ENCODE measurements at regions of chr9 and their contacts with region 1.

Region 1: DNA sequence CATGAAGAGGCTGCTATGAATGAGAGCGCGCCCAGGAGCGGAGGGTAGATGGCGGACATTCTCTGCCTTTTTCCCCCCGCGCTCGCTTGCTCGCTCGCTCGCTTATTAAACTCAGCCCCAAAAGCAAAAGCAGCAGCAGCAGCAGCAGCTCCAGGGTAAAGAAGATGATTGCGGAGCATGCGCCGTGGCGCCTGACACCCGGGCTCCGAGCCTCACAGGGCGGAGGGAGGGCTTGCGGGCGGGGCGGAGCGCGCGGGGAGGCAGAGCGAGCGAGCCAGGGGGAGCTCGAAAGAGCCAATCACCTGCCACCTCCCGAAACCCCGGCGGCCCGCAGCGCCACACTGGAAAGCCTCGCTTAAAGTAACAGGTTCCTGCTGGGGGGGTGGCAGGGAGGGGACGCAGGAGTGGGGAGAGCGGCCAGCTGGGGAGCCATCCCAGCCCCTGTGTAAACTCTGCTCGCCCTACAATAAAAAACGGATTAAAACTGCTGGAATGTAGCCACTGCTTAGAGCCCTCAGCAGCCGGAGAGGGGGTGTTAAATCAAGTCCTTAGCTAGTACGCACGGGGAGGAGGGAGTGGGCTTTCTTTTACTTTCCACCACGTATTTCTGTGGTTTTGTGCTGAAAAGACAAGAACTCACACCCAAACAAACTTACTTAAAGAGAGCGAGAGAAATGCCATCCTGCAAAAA is at the start of gene MLLT3:
- DNase-seq: peak; percentile 91 to 98 (median 98)
- ATAC-seq: peak; percentile 88
- H3K4me3 ChIP-seq: peak within 1 kb of the TSS; percentile 84
- H3K4me3 Mint-ChIP-seq: peak within 1 kb of the TSS; percentile 92 to 100 (median 98)
- H3K27ac ChIP-seq: peak within 1 kb of the TSS; percentile 89
- H3K27ac Mint-ChIP-seq: peak within 1 kb of the TSS; percentile 89 to 100 (median 99)
- H3K4me1 ChIP-seq: peaks cover 21 to 40% of the 10 kb centered on the region in 2 donors
- H3K4me1 Mint-ChIP-seq: peaks cover 30 to 48% (median 45%) of the 10 kb centered on the region in 7 donors
- H3K27me3 ChIP-seq: no peaks in the 10 kb centered on the region
- H3K27me3 Mint-ChIP-seq: no peaks in the 10 kb centered on the region
- total RNA-seq, gene MLLT3: 40.9 to 85.3 (median 71.3) TPM

Region 2: GRCh38 chr9:19048966-19049916 is 1573.2 kb before region 1 on chr9 and contains the start of gene RRAGA:
- CTCF ChIA-PET with region 1: no interaction called
- POLR2A ChIA-PET with region 1: no interaction called
- intact Hi-C with region 1: loop called (anchors 1 to 5 kb)
- DNase-seq: peak; percentile 90 to 96 (median 95)
- ATAC-seq: peak; percentile 95
- H3K4me3 ChIP-seq: peak within 1 kb of the TSS; percentile 88
- H3K4me3 Mint-ChIP-seq: peak within 1 kb of the TSS; percentile 92 to 99 (median 95)
- H3K27ac ChIP-seq: peak within 1 kb of the TSS; percentile 85
- H3K27ac Mint-ChIP-seq: peak within 1 kb of the TSS; percentile 97 to 100 (median 98)
- H3K4me1 ChIP-seq: peaks cover 20% of the 10 kb centered on the region in 2 donors
- H3K4me1 Mint-ChIP-seq: peaks cover 6 to 50% (median 42%) of the 10 kb centered on the region in 7 donors
- H3K27me3 ChIP-seq: no peaks in the 10 kb centered on the region
- H3K27me3 Mint-ChIP-seq: peaks cover 0 to 2% (median 0%) of the 10 kb centered on the region in 5 donors
- total RNA-seq, gene RRAGA: 25.9 to 53.6 (median 51.9) TPM

Region 3: GRCh38 chr9:19976226-19976625 is 646.2 kb before region 1 on chr9:
- CTCF ChIA-PET with region 1: no interaction called
- POLR2A ChIA-PET with region 1: no interaction called
- intact Hi-C with region 1: loop called in 1 of 2 experiments (anchors 1 kb)
- DNase-seq: peak in 8 of 9 donors; percentile 20 to 58 (median 39)
- ATAC-seq: peak; percentile 63
- H3K4me3 ChIP-seq: no peak overlapping the region
- H3K4me3 Mint-ChIP-seq: peak overlapping the region in 7 of 10 donors; percentile 1 to 69 (median 42)
- H3K27ac ChIP-seq: no peak overlapping the region
- H3K27ac Mint-ChIP-seq: peak overlapping the region; percentile 5 to 89 (median 79)
- H3K4me1 ChIP-seq: peaks cover 0 to 14% of the 10 kb centered on the region in 2 donors
- H3K4me1 Mint-ChIP-seq: peaks cover 7 to 30% (median 29%) of the 10 kb centered on the region in 7 donors
- H3K27me3 ChIP-seq: no peaks in the 10 kb centered on the region
- H3K27me3 Mint-ChIP-seq: no peaks in the 10 kb centered on the region

Region 4: DNA sequence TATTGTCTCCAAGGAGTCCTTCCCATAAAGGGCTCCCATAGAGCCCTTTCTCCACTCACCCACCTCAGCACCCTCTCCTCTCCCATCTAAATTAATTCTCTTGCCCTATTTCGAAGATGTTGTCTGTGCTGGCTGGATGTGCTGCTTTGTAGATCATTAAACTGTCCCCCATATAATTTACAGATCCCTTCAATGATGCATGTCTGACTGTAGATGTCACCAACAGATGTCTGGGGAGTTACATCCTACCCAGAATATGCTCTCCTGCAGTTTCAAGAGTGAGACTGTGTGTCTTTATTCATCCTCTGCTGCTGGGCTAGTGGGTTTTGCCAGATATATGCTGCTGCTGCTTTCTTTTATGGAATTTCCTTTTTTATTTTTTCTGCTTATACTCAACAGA is 351.4 kb before region 1 on chr9:
- CTCF ChIA-PET with region 1: no interaction called
- POLR2A ChIA-PET with region 1: interaction called, 4 read pairs
- intact Hi-C with region 1: loop called in 1 of 2 experiments (anchors 1 kb)
- DNase-seq: peak in 5 of 9 donors; percentile 9 to 34 (median 25)
- ATAC-seq: no peak
- H3K4me3 ChIP-seq: no peak overlapping the region
- H3K4me3 Mint-ChIP-seq: no peak overlapping the region
- H3K27ac ChIP-seq: no peak overlapping the region
- H3K27ac Mint-ChIP-seq: peak overlapping the region in 5 of 9 donors; percentile 0 to 42 (median 12)
- H3K4me1 ChIP-seq: no peaks in the 10 kb centered on the region
- H3K4me1 Mint-ChIP-seq: peaks cover 7 to 35% (median 12%) of the 10 kb centered on the region in 7 donors
- H3K27me3 ChIP-seq: no peaks in the 10 kb centered on the region
- H3K27me3 Mint-ChIP-seq: no peaks in the 10 kb centered on the region

Region 5: DNA sequence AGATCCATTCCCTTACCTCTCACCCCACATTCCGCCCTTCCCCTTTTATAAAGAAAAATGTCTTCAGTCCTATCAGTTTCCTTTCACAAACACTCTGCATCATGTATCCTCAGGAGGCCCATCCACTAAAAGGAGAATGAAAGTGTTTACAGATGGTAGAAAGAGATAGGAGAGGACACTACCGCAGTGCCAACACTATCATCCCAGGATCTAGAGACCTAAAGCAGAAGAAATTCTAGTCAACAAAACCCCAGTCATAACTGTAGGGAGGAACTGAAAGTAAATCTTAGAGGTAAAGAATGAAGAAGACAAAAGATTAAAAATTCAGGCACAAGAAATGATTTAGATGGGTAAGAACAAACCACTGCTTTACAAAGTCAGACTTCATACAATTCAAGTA is 114.2 kb before region 1 on chr9:
- CTCF ChIA-PET with region 1: no interaction called
- POLR2A ChIA-PET with region 1: interaction called, 5 read pairs
- intact Hi-C with region 1: loop called (anchors 1 to 2 kb)
- DNase-seq: peak in 3 of 9 donors; percentile 8 to 22 (median 14)
- ATAC-seq: peak; percentile 60
- H3K4me3 ChIP-seq: no peak overlapping the region
- H3K4me3 Mint-ChIP-seq: peak overlapping the region; percentile 4 to 76 (median 64)
- H3K27ac ChIP-seq: peak overlapping the region; percentile 24
- H3K27ac Mint-ChIP-seq: peak overlapping the region; percentile 54 to 95 (median 85)
- H3K4me1 ChIP-seq: peaks cover 11 to 54% of the 10 kb centered on the region in 2 donors
- H3K4me1 Mint-ChIP-seq: peaks cover 64 to 90% (median 89%) of the 10 kb centered on the region in 7 donors
- H3K27me3 ChIP-seq: no peaks in the 10 kb centered on the region
- H3K27me3 Mint-ChIP-seq: no peaks in the 10 kb centered on the region

Region 6: DNA sequence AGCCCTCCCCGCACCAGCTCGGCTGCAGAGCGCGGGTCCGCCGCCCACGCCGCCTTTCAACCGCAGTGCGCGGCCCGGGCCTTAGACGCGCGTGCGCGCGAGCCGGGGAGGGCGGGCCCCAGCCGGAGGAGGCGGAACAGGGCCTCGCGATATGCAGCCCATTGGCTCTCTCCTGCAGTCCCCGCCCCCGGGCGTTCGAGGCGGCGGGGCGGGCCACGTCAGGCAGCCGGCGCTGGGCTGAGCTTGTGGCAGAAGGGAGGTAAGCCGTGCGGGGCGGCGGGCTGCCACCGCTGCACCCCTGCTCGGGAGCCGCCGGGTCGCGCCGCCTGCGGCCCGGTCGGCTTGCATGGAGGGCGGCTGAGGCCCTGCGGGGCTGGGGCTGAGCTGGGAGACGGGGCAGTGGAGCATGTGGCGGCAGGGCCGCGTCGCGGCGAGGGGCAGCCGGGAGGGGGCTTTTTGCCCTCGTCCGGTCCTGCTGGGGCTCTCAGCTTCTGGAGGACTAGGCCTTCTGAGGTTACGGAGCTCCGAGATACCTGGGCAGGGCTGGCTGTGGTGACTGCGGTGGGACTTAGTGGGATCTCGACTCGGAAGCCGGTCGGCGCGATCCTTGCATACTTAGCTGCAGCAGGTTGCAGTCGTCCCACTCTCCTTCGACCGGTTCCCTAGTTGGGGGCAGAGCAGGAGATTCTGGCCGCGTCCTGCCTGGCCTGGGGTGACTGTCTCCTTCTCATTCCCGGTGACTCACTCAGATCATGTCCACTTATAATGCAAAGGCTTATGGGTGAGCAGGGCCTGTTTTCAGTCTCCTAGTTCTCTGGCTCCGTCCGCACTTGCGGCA is 61.8 kb after region 1 on chr9 and contains the start of gene FOCAD:
- CTCF ChIA-PET with region 1: interaction called, 4 read pairs
- POLR2A ChIA-PET with region 1: interaction called, 31 read pairs
- intact Hi-C with region 1: loop called (anchors 1 kb)
- DNase-seq: peak; percentile 94 to 99 (median 96)
- ATAC-seq: peak; percentile 99
- H3K4me3 ChIP-seq: peak within 1 kb of the TSS; percentile 95
- H3K4me3 Mint-ChIP-seq: peak within 1 kb of the TSS; percentile 89 to 98 (median 96)
- H3K27ac ChIP-seq: peak within 1 kb of the TSS; percentile 81
- H3K27ac Mint-ChIP-seq: peak within 1 kb of the TSS; percentile 78 to 96 (median 92)
- H3K4me1 ChIP-seq: peaks cover 0 to 6% of the 10 kb centered on the region in 2 donors
- H3K4me1 Mint-ChIP-seq: peaks cover 11 to 29% (median 24%) of the 10 kb centered on the region in 7 donors
- H3K27me3 ChIP-seq: no peaks in the 10 kb centered on the region
- H3K27me3 Mint-ChIP-seq: no peaks in the 10 kb centered on the region
- total RNA-seq, gene FOCAD: 12.8 to 33.7 (median 22.3) TPM

Region 7: GRCh38 chr9:21110708-21111576 is 488.5 kb after region 1 on chr9:
- CTCF ChIA-PET with region 1: interaction called, 9 read pairs
- POLR2A ChIA-PET with region 1: interaction called, 3 read pairs
- intact Hi-C with region 1: loop called (anchors 1 kb)
- DNase-seq: peak in 7 of 9 donors; percentile 43 to 72 (median 62)
- ATAC-seq: peak; percentile 92
- H3K4me3 ChIP-seq: no peak overlapping the region
- H3K4me3 Mint-ChIP-seq: no peak overlapping the region
- H3K27ac ChIP-seq: no peak overlapping the region
- H3K27ac Mint-ChIP-seq: peak overlapping the region in 1 of 9 donors; percentile 51
- H3K4me1 ChIP-seq: no peaks in the 10 kb centered on the region
- H3K4me1 Mint-ChIP-seq: peaks cover 0 to 3% (median 0%) of the 10 kb centered on the region in 7 donors
- H3K27me3 ChIP-seq: no peaks in the 10 kb centered on the region
- H3K27me3 Mint-ChIP-seq: peaks cover 0 to 19% (median 0%) of the 10 kb centered on the region in 5 donors

Measured in naive thymus-derived CD4-positive, alpha-beta T cell (primary cell).